ENCODE measurements at regions of chr20 and their contacts with region 1.

Region 1: GRCh38 chr20:18072532-18072931 is 14.8 kb upstream of the OVOL2 start:
- DNase-seq: no peak
- H3K4me3 ChIP-seq: no peak overlapping the region
- H3K27ac ChIP-seq: no peak overlapping the region
- H3K4me1 ChIP-seq: no peaks in the 10 kb centered on the region
- H3K27me3 ChIP-seq: peaks cover 2% of the 10 kb centered on the region
- CTCF ChIP-seq: no peak

Region 2: DNA sequence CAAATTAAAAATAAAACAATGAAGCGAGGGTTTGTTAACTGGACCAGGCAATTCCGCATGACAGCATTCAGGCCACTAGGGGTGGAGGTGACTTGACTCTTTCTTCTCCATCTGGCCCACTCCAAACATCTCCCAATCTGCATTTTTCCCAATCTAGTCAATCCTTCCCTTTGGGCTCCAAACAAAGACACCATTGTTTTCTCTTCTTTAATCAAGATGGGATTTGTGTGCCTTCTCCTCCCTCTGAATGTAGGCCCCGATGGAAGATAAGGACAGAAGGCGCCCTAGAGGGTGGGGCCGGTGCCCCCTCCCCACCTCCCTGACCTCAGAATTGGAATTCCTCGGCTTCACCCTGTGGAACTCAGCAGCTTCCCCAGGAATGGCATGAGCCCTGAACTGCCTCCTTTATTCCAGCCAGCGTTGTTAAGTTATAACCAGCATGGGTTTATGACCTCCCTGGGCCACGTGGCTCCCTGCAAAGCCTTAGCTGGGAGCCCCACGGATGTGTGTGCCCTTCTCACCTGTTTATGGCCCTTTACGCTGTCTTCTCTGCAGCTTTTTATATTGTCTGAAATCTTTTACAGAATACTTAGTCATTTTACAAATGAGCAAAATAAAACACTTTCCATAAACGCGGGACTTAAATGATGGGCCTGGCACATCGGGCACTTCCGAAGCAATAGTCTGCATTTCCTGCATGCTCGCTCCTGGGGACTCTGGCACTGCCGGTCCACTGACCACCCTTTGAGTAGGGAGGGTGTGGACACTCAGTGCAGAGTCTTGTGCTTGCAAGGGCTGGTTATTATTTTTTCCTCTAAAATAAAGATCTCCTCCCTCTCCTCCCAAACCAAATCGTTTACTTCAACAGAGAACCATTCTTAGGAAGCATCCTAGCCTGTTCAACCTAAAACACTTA is 39.3 kb before region 1 on chr20:
- CTCF ChIA-PET with region 1: no interaction called
- dilution Hi-C with region 1: loop called (anchors 5 kb)
- in situ Hi-C with region 1: no loop called
- intact Hi-C with region 1: no loop called
- DNase-seq: peak; percentile 25
- H3K4me3 ChIP-seq: no peak overlapping the region
- H3K27ac ChIP-seq: no peak overlapping the region
- H3K4me1 ChIP-seq: peaks cover 2% of the 10 kb centered on the region
- H3K27me3 ChIP-seq: no peaks in the 10 kb centered on the region
- CTCF ChIP-seq: no peak

Region 3: GRCh38 chr20:18164356-18164755 is 91.8 kb after region 1 on chr20:
- CTCF ChIA-PET with region 1: no interaction called
- dilution Hi-C with region 1: no loop called
- in situ Hi-C with region 1: no loop called
- intact Hi-C with region 1: no loop called
- DNase-seq: peak; percentile 91
- H3K4me3 ChIP-seq: no peak overlapping the region
- H3K27ac ChIP-seq: peak overlapping the region; percentile 59
- H3K4me1 ChIP-seq: peaks cover 17% of the 10 kb centered on the region
- H3K27me3 ChIP-seq: no peaks in the 10 kb centered on the region
- CTCF ChIP-seq: no peak

Region 4: GRCh38 chr20:18197382-18198131 is 125.0 kb after region 1 on chr20:
- CTCF ChIA-PET with region 1: no interaction called
- dilution Hi-C with region 1: no loop called
- in situ Hi-C with region 1: no loop called
- intact Hi-C with region 1: no loop called
- DNase-seq: peak; percentile 98
- H3K4me3 ChIP-seq: no peak overlapping the region
- H3K27ac ChIP-seq: peak overlapping the region; percentile 96
- H3K4me1 ChIP-seq: peaks cover 11% of the 10 kb centered on the region
- H3K27me3 ChIP-seq: no peaks in the 10 kb centered on the region
- CTCF ChIP-seq: peak; percentile 45 to 47

Region 5: GRCh38 chr20:18304585-18304984 is 232.1 kb after region 1 on chr20:
- CTCF ChIA-PET with region 1: no interaction called
- dilution Hi-C with region 1: no loop called
- in situ Hi-C with region 1: no loop called
- intact Hi-C with region 1: no loop called
- DNase-seq: no peak
- H3K4me3 ChIP-seq: no peak overlapping the region
- H3K27ac ChIP-seq: no peak overlapping the region
- H3K4me1 ChIP-seq: no peaks in the 10 kb centered on the region
- H3K27me3 ChIP-seq: no peaks in the 10 kb centered on the region
- CTCF ChIP-seq: peak; percentile 30 to 46